Activated CD4-positive, alpha-beta T cell treated with anti-CD3 and anti-CD28 coated beads for 36 hours (primary cell): ENCODE measurements at regions of chr5 and their contacts with region 1.

Region 1: GRCh38 chr5:80754900-80755299 is 100.1 kb upstream of the DHFR start:
- DNase-seq: peak; percentile 71
- ATAC-seq: peak; percentile 60
- H3K4me3 Mint-ChIP-seq: peak overlapping the region; percentile 41
- H3K27ac Mint-ChIP-seq: peak overlapping the region; percentile 80
- H3K4me1 Mint-ChIP-seq: peaks cover 55% of the 10 kb centered on the region
- H3K27me3 Mint-ChIP-seq: no peaks in the 10 kb centered on the region

Region 2: DNA sequence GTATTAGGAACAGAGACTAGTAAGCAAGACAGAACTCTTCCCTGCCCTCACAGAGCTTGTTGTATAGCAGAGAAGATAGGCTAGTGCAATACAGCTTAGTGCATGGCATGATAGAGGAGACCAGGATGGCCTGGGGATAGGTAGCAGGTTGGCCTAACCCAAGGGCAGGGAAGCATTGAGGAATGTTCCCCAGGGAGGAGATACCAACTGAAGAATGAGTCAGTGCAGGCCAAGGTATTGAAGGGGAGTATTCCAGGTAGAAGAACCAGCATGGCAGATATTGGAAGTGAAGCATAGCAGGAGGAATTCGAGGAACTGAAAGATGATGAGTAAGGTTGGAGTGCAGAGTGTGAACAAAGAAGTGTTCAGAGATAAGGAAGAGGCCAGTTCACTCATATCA is 38.5 kb after region 1 on chr5:
- CTCF ChIA-PET with region 1: no interaction called
- POLR2A ChIA-PET with region 1: no interaction called
- intact Hi-C with region 1: loop called in 1 of 2 experiments (anchors 2 kb)
- DNase-seq: no peak
- ATAC-seq: no peak
- H3K4me3 Mint-ChIP-seq: no peak overlapping the region
- H3K27ac Mint-ChIP-seq: no peak overlapping the region
- H3K4me1 Mint-ChIP-seq: peaks cover 9% of the 10 kb centered on the region
- H3K27me3 Mint-ChIP-seq: no peaks in the 10 kb centered on the region

Region 3: GRCh38 chr5:80864706-80865435 is 110.0 kb after region 1 on chr5:
- CTCF ChIA-PET with region 1: no interaction called
- POLR2A ChIA-PET with region 1: no interaction called
- intact Hi-C with region 1: loop called (anchors 2 kb)
- DNase-seq: peak; percentile 39
- ATAC-seq: peak; percentile 78
- H3K4me3 Mint-ChIP-seq: no peak overlapping the region
- H3K27ac Mint-ChIP-seq: peak overlapping the region; percentile 21
- H3K4me1 Mint-ChIP-seq: peaks cover 53% of the 10 kb centered on the region
- H3K27me3 Mint-ChIP-seq: no peaks in the 10 kb centered on the region

Region 4: GRCh38 chr5:81006947-81007636 is 252.2 kb after region 1 on chr5:
- CTCF ChIA-PET with region 1: no interaction called
- POLR2A ChIA-PET with region 1: no interaction called
- intact Hi-C with region 1: loop called (anchors 1 to 5 kb)
- DNase-seq: peak; percentile 71
- ATAC-seq: peak; percentile 83
- H3K4me3 Mint-ChIP-seq: peak overlapping the region; percentile 77
- H3K27ac Mint-ChIP-seq: peak overlapping the region; percentile 96
- H3K4me1 Mint-ChIP-seq: peaks cover 82% of the 10 kb centered on the region
- H3K27me3 Mint-ChIP-seq: no peaks in the 10 kb centered on the region

Region 5: GRCh38 chr5:81288021-81288433 is 533.1 kb after region 1 on chr5:
- CTCF ChIA-PET with region 1: no interaction called
- POLR2A ChIA-PET with region 1: interaction called, 4 read pairs
- intact Hi-C with region 1: loop called (anchors 5 kb)
- DNase-seq: no peak
- ATAC-seq: peak; percentile 14
- H3K4me3 Mint-ChIP-seq: no peak overlapping the region
- H3K27ac Mint-ChIP-seq: no peak overlapping the region
- H3K4me1 Mint-ChIP-seq: peaks cover 57% of the 10 kb centered on the region
- H3K27me3 Mint-ChIP-seq: no peaks in the 10 kb centered on the region